ENCODE measurements at regions of chr7 and their contacts with region 1.

Region 1: DNA sequence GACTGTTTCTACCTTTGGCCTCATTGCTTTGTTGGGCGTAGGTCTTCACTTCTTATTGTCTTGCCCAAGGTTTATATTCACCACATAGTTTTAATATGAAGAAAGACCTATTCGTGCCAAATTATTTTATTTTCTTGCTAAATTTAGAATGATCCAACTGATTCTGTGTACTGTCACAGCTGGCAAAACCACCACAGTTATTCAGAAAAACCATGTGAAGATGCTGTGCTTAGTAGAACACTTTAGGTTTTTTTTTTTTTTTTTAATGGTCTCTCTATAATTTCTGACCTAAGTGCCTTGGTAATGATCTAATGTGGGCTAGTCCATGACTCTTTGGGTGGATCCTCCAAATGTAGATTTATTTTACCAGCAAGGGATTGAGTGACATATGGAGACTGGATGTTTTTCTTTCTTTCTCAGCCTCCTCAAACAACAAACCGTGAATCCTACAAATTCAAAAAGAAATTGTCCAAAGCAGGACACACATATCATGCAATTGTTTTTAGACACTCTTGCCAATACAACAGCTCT is 243.8 kb downstream of the DYNC1I1 start:
- DNase-seq: no peak
- H3K4me3 ChIP-seq: no peak overlapping the region
- H3K27ac ChIP-seq: no peak overlapping the region
- H3K4me1 ChIP-seq: no peaks in the 10 kb centered on the region; a peak in 1 of 4 replicates
- H3K27me3 ChIP-seq: no peaks in the 10 kb centered on the region
- CTCF ChIP-seq: no peak
- EP300 ChIP-seq: no peak
- RAD21 ChIP-seq: no peak

Region 2: DNA sequence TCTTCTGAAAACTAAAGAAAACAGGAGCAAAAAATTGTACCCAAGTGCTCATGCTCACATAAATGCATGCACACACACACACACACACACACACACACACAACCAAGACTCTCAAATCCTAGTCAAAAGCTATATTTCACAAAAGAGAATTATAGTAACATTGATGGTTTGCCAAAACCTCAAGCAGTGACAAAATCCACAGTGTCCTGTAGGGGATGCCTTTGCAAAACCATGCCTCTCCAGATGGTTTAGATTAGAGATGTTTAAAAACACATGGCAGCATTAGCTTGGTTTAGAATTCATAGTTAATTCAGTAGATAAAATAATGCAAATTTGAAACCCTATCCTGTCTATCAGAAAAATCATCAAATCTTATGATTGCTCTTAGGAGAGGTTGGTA is 11.5 kb before region 1 on chr7:
- CTCF ChIA-PET with region 1: interaction called, 11 read pairs
- POLR2A ChIA-PET with region 1: no interaction called
- DNase-seq: peak; percentile 65
- H3K4me3 ChIP-seq: no peak overlapping the region
- H3K27ac ChIP-seq: no peak overlapping the region
- H3K4me1 ChIP-seq: peaks cover 0 to 11% of the 10 kb centered on the region in 2 experiments; a peak in 2 of 4 replicates
- H3K27me3 ChIP-seq: no peaks in the 10 kb centered on the region
- CTCF ChIP-seq: peak; percentile 43
- EP300 ChIP-seq: 0 out of 4 replicates have a peak, but pooled peaks of 1 of the 2 experiments have one; percentile 27
- RAD21 ChIP-seq: peak; percentile 55